AG04449 (cell line): ENCODE measurements at regions of chr14 and their contacts with region 1.

Region 1: DNA sequence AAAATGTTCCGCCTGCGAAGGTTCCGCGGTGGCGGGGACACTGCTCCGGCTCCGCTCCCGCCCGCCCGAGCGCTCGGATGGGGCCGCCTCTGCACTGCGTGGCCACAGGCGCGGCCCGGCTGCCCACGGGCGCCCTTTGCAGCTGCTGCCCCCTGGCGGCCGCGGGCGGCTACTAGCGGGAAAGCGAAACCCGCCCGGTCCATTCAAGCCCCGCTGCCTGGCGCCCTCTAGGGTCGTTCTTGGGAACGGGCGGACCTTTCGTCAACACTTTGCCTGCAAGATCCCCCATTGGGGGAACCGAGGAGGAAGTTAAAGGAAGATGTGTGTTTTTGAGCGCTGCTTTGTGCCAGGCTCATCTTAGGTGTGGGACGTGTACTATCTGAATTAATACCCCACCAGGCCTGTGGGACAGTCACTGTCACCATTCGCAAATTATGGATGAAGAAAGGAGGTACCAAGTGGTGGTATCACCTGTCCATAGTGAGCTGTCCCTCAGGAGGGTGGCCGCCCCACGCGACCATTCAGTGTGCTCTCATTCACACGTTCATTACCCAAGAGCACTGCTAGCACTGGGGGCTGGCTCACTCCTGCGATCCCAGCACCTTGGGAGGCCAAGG is 19.4 kb downstream of the GPR132 start:
- DNase-seq: no peak
- H3K4me3 ChIP-seq: peak overlapping the region; percentile 10
- CTCF ChIP-seq: peak; percentile 99

Region 2: GRCh38 chr14:104895786-104896661 is 149.8 kb before region 1 on chr14:
- CTCF ChIA-PET with region 1: interaction called, 59 read pairs
- POLR2A ChIA-PET with region 1: no interaction called
- DNase-seq: no peak
- H3K4me3 ChIP-seq: no peak overlapping the region
- CTCF ChIP-seq: no peak

Region 3: DNA sequence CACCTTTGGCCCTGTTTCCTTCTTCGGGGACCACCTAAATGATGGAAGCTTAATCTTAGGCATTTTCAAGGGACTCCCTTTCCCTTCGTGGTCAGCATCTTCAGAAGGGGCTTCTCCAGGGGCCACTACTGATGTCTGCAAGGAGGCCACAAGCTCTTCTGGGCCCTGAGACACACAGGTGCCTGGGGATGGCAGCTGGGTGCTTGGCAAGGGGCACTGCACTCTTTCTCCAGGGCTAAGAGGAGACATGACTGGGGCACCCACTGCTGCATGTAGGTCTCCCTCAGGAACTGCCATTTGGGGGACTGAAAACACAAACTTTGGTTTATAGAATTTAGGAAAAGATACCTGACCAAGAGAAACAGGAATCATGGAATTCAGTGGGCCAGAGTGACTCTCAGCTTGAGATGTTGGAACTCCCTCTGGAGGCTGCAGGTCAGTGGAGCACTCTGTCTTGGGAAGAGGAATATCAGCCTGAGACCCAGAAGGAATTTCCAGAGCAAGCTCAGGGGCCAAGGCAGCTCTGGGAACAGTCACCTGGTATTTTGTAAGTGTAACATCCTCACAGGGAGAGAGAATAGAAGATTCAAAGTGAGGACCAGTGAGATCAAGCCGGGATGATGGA is 105.2 kb before region 1 on chr14:
- CTCF ChIA-PET with region 1: interaction called, 25 read pairs
- POLR2A ChIA-PET with region 1: no interaction called
- DNase-seq: no peak
- H3K4me3 ChIP-seq: no peak overlapping the region
- CTCF ChIP-seq: no peak

Region 4: GRCh38 chr14:104976198-104977007 is 69.4 kb before region 1 on chr14:
- CTCF ChIA-PET with region 1: interaction called, 383 read pairs
- POLR2A ChIA-PET with region 1: no interaction called
- DNase-seq: no peak
- H3K4me3 ChIP-seq: no peak overlapping the region
- CTCF ChIP-seq: peak; percentile 99

Region 5: DNA sequence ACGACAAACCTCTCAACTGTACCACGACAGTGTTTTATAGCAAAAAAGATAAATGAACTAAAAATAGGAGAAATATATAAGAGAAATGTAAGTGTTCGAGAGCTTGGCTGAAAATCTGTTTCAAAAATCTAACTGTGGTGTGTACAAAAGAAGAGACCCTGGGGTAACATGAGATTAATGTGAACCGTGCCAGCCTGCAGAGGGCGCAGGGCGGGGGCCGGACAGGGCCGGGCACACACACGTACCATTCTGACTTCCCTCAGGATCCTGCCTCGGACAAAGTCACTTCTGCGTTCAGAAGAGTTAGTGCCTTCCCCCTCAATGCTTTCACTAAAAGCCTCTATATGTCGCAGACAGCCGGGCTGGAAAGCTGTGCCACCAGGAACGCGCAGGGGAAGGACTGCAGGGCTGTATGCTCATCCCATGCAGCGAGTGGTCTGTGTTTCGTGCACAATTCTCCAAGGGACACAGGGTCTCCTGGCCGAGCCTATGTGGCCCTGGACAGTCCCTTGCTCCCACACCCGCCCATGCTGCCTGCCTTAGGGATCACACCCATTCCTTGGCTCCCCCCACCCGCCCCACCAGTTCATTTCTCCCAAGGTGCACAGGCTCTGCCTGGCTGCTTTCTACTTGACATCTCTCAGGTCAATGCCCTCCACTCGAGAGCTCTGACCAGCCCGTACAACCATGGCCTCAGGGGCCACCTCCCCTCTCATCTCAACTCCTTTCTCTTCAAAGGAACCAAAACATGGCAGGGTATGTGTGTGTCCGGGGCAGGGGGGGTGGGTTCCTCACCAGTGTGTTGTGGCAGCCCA is 33.4 kb before region 1 on chr14:
- CTCF ChIA-PET with region 1: interaction called, 18 read pairs
- POLR2A ChIA-PET with region 1: no interaction called
- DNase-seq: no peak
- H3K4me3 ChIP-seq: no peak overlapping the region
- CTCF ChIP-seq: peak; percentile 19

Region 6: GRCh38 chr14:105069871-105070759 is 24.3 kb after region 1 on chr14:
- CTCF ChIA-PET with region 1: interaction called, 17 read pairs
- POLR2A ChIA-PET with region 1: no interaction called
- DNase-seq: no peak
- H3K4me3 ChIP-seq: no peak overlapping the region
- CTCF ChIP-seq: no peak

Region 7: DNA sequence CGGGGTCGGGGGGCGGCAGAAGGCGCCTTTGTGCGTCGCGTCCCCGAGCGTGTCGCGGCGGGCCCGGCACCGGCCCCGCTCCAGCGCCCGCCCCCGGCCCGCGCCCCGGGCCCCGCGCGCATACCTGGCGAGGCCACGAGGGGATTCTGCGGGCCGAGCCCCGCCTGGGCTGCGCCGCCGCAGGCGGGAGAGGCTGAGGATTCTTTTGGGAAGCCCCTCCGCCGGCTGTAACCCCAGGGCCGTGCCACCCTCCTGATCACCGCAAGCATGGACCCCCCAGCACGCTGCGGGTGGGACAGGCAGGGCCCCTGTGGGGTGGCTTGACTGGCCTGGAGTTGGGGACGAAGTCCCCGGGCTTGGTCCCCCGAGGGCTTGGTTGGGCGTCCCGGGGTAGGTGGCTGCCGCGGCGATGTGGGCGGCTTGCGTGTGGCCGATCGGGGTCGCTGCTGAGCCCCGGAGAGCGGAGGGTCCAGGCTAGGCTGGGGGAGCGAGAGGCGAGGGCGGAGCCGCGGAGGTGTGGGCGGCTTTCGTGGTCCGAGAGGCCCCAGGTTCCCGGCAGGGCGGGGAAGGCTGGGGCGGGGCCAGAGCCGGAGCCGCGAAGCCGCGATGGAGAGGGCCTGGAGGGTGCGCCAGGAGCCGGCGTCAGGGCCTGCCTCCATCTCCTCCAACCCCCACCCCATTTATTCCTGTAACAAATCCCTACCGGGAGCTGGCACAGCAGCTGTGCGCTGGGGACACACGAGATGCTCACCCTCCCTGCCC is 47.8 kb after region 1 on chr14:
- CTCF ChIA-PET with region 1: no interaction called
- POLR2A ChIA-PET with region 1: no interaction called
- DNase-seq: no peak
- H3K4me3 ChIP-seq: peak overlapping the region; percentile 76
- CTCF ChIP-seq: peak; percentile 78